ENCODE measurements at regions of chr3 and their contacts with region 1.

Region 1: DNA sequence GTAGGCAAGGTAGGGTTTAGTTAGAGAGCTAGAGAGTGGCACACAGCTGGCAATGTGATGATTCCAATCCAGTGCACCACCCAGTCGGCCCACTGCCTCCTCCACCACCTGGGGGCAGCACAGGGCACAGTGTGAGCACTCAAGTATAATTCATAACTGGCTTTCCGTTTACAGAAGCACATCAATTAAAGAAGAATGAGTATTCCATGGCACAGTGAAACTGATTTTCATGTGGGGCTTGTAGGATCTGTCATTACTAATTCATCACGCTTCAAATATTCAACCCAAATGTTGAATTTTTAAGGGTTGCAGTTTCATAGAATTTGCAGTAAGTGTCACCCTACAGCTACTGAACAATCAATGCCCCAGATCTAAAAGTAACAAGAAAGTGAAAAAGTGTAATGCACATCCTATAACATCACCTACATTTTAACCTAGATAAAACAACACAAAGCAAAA is 149.9 kb downstream of the IGSF11 start:
- DNase-seq: peak; percentile 63 to 74 (median 68)
- H3K4me3 ChIP-seq: no peak overlapping the region
- H3K4me3 Mint-ChIP-seq: peak overlapping the region in 1 of 8 donors; percentile 59
- H3K27ac ChIP-seq: no peak overlapping the region
- H3K27ac Mint-ChIP-seq: no peak overlapping the region
- H3K4me1 ChIP-seq: no peaks in the 10 kb centered on the region
- H3K4me1 Mint-ChIP-seq: peaks cover 0 to 7% (median 4%) of the 10 kb centered on the region in 4 donors
- H3K27me3 ChIP-seq: no peaks in the 10 kb centered on the region
- H3K27me3 Mint-ChIP-seq: peaks cover 2 to 8% of the 10 kb centered on the region in 2 donors

Region 2: GRCh38 chr3:116958291-116958690 is 1926.5 kb before region 1 on chr3:
- CTCF ChIA-PET with region 1: no interaction called
- POLR2A ChIA-PET with region 1: no interaction called
- intact Hi-C with region 1: no loop called
- DNase-seq: no peak
- H3K4me3 ChIP-seq: no peak overlapping the region
- H3K4me3 Mint-ChIP-seq: no peak overlapping the region
- H3K27ac ChIP-seq: no peak overlapping the region
- H3K27ac Mint-ChIP-seq: no peak overlapping the region
- H3K4me1 ChIP-seq: no peaks in the 10 kb centered on the region
- H3K4me1 Mint-ChIP-seq: no peaks in the 10 kb centered on the region
- H3K27me3 ChIP-seq: no peaks in the 10 kb centered on the region
- H3K27me3 Mint-ChIP-seq: no peaks in the 10 kb centered on the region

Region 3: GRCh38 chr3:118593277-118593670 is 291.5 kb before region 1 on chr3:
- CTCF ChIA-PET with region 1: no interaction called
- POLR2A ChIA-PET with region 1: no interaction called
- intact Hi-C with region 1: no loop called
- DNase-seq: no peak
- H3K4me3 ChIP-seq: no peak overlapping the region
- H3K4me3 Mint-ChIP-seq: no peak overlapping the region
- H3K27ac ChIP-seq: no peak overlapping the region
- H3K27ac Mint-ChIP-seq: no peak overlapping the region
- H3K4me1 ChIP-seq: no peaks in the 10 kb centered on the region
- H3K4me1 Mint-ChIP-seq: no peaks in the 10 kb centered on the region
- H3K27me3 ChIP-seq: no peaks in the 10 kb centered on the region
- H3K27me3 Mint-ChIP-seq: no peaks in the 10 kb centered on the region

Region 4: GRCh38 chr3:118850687-118851086 is 34.1 kb before region 1 on chr3:
- CTCF ChIA-PET with region 1: interaction called, 20 read pairs
- POLR2A ChIA-PET with region 1: no interaction called
- intact Hi-C with region 1: no loop called
- DNase-seq: no peak
- H3K4me3 ChIP-seq: no peak overlapping the region
- H3K4me3 Mint-ChIP-seq: no peak overlapping the region
- H3K27ac ChIP-seq: no peak overlapping the region
- H3K27ac Mint-ChIP-seq: peak overlapping the region in 2 of 7 donors; percentile 5 to 15
- H3K4me1 ChIP-seq: peaks cover 5% of the 10 kb centered on the region
- H3K4me1 Mint-ChIP-seq: peaks cover 0 to 8% (median 2%) of the 10 kb centered on the region in 4 donors
- H3K27me3 ChIP-seq: no peaks in the 10 kb centered on the region
- H3K27me3 Mint-ChIP-seq: peaks cover 0 to 2% of the 10 kb centered on the region in 2 donors

Region 5: DNA sequence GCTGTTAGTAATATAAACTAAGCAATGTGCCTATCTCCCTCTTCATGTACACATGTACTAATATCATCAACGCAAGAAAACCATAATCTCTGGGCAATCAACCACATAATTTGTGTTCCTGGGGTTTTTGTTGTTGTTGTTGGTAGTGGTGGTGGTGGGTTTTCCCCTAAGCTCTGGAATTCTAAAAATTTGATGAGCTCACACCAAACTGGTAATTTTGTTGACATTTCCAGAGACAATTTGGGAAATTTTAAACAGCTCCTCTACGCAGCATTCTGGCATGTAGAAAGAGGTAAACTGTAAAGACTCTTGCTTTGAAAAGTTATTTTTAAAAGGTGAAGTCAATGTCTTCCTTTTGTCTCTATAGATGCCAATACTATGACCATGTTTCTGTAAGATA is 23.1 kb after region 1 on chr3:
- CTCF ChIA-PET with region 1: interaction called, 17 read pairs
- POLR2A ChIA-PET with region 1: no interaction called
- intact Hi-C with region 1: no loop called
- DNase-seq: no peak
- H3K4me3 ChIP-seq: no peak overlapping the region
- H3K4me3 Mint-ChIP-seq: no peak overlapping the region
- H3K27ac ChIP-seq: no peak overlapping the region
- H3K27ac Mint-ChIP-seq: no peak overlapping the region
- H3K4me1 ChIP-seq: no peaks in the 10 kb centered on the region
- H3K4me1 Mint-ChIP-seq: peaks cover 0 to 3% (median 0%) of the 10 kb centered on the region in 4 donors
- H3K27me3 ChIP-seq: no peaks in the 10 kb centered on the region
- H3K27me3 Mint-ChIP-seq: peaks cover 4 to 6% of the 10 kb centered on the region in 2 donors

Region 6: GRCh38 chr3:119034256-119035013 is 149.7 kb after region 1 on chr3 and contains the start of gene IGSF11:
- CTCF ChIA-PET with region 1: interaction called, 439 read pairs
- POLR2A ChIA-PET with region 1: interaction called, 9 read pairs
- intact Hi-C with region 1: loop called (anchors 1 kb)
- DNase-seq: peak; percentile 47 to 68 (median 62)
- H3K4me3 ChIP-seq: peak within 1 kb of the TSS in 1 of 2 donors; percentile 51
- H3K4me3 Mint-ChIP-seq: peak within 1 kb of the TSS; percentile 81 to 93 (median 86)
- H3K27ac ChIP-seq: no peak within 1 kb of the TSS
- H3K27ac Mint-ChIP-seq: peak within 1 kb of the TSS in 1 of 7 donors; percentile 43
- H3K4me1 ChIP-seq: peaks cover 4% of the 10 kb centered on the region
- H3K4me1 Mint-ChIP-seq: peaks cover 0 to 11% (median 4%) of the 10 kb centered on the region in 4 donors
- H3K27me3 ChIP-seq: peaks cover 15% of the 10 kb centered on the region
- H3K27me3 Mint-ChIP-seq: peaks cover 19 to 36% of the 10 kb centered on the region in 2 donors
- total RNA-seq, gene IGSF11: 0.22 to 0.44 TPM

Region 7: DNA sequence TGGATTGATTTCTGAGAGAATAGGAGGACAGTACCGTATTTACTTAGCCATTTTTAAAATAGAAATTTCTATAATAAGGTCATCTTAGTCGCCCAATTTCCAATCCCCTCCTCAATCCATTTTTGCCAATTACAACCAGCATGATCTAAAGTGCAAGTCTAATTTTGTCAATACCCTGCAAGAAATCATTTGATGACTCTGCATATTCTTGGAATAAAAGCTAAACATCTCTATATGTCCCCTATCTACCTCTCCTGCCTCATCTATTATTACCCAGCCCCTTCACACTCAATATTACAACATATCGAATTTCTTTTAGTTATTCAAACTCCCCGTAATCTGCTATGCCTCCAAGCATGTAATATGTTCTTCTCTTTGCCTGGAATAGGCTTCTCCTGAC is 219.3 kb after region 1 on chr3:
- CTCF ChIA-PET with region 1: interaction called, 279 read pairs
- POLR2A ChIA-PET with region 1: no interaction called
- intact Hi-C with region 1: no loop called
- DNase-seq: no peak
- H3K4me3 ChIP-seq: no peak overlapping the region
- H3K4me3 Mint-ChIP-seq: no peak overlapping the region
- H3K27ac ChIP-seq: no peak overlapping the region
- H3K27ac Mint-ChIP-seq: no peak overlapping the region
- H3K4me1 ChIP-seq: no peaks in the 10 kb centered on the region
- H3K4me1 Mint-ChIP-seq: no peaks in the 10 kb centered on the region
- H3K27me3 ChIP-seq: no peaks in the 10 kb centered on the region
- H3K27me3 Mint-ChIP-seq: peaks cover 0 to 3% of the 10 kb centered on the region in 2 donors

Region 8: GRCh38 chr3:119559441-119559963 is 674.7 kb after region 1 on chr3 and contains the start of gene CD80:
- CTCF ChIA-PET with region 1: interaction called, 3 read pairs
- POLR2A ChIA-PET with region 1: no interaction called
- intact Hi-C with region 1: loop called (anchors 2 kb)
- DNase-seq: peak; percentile 44 to 54 (median 46)
- H3K4me3 ChIP-seq: peak within 1 kb of the TSS in 1 of 2 donors; percentile 31
- H3K4me3 Mint-ChIP-seq: peak within 1 kb of the TSS in 7 of 8 donors; percentile 28 to 61 (median 53)
- H3K27ac ChIP-seq: peak within 1 kb of the TSS; percentile 16
- H3K27ac Mint-ChIP-seq: peak within 1 kb of the TSS in 6 of 7 donors; percentile 44 to 81 (median 63)
- H3K4me1 ChIP-seq: peaks cover 25% of the 10 kb centered on the region
- H3K4me1 Mint-ChIP-seq: peaks cover 16 to 29% (median 21%) of the 10 kb centered on the region in 4 donors
- H3K27me3 ChIP-seq: no peaks in the 10 kb centered on the region
- H3K27me3 Mint-ChIP-seq: no peaks in the 10 kb centered on the region
- total RNA-seq, gene CD80: 0.42 to 0.44 TPM